ENCODE measurements at regions of chr4 and their contacts with region 1.

Region 1: DNA sequence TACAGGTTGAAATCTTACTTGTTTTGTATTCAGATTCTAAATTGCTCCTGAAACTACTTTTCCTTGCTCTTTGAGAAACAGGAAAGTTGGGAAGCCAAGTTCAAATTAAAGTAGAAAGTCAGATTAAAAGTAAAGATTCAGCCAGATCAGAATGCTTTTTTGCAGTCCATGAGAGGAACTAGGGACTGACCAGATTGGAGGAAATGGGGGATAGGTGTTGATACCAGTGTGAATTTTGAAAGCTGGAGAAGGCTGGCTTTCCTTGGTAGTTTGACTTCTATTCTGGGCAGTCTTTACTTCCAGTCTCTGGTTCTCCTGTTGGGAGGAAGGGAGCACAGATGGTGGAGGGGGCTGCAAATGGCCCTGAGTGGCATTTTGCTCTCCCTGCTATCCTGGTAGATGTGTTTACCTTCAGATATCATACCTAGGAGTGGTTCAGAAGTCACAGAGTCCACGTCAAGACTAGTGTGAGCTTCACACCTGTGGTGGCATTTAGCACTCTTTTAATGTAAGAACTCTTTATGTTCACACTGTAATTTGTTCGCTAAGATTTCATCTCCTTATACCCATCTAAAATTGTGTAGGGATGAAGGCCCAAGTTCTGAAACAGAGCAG is 68.8 kb downstream of the FNIP2 start:
- DNase-seq: no peak
- ATAC-seq: no peak
- H3K4me3 ChIP-seq: no peak overlapping the region
- H3K27ac ChIP-seq: no peak overlapping the region
- H3K4me1 ChIP-seq: no peaks in the 10 kb centered on the region
- H3K27me3 ChIP-seq: no peaks in the 10 kb centered on the region
- CTCF ChIP-seq: no peak
- EP300 ChIP-seq: no peak
- POLR2A ChIP-seq: no peak
- RAD21 ChIP-seq: no peak

Region 2: DNA sequence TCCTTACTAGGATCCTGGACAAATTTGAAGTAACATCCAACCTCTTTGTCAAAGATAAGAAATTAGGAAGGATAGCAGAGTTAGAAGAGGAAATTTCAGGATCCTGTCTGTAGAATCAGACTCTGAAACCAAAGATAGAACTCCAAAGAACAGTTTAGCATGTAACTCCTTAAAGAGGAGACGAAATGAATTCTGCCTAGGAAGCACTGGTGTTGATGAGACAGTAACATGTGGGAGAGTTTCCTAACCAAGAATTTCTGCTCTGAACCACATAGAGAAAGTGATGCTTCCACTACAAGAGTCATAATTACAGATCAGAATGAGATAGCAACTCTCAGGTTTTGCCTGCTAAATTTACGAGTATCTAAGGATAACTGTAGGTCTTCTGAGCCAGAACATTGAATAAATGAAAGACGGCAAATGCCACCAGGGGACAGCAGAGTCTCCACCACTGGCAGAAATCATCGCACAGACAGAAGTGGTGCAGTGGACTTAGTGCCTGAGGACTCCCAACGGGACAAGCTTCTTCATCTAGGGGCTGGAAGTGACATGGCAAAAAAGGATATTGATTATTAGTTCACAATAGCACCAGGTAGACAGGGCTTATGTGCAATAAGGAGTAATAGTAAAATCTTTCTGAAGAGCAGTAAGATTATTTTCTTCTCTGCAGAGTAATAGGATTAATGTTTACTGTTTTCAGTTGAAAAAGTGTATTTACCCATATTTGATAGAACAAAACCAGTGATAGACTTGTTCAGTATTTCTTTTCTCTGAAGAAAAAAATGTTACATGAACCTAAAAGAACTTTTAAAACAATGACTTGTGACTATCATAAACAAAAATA is 107.7 kb before region 1 on chr4:
- CTCF ChIA-PET with region 1: no interaction called
- POLR2A ChIA-PET with region 1: no interaction called
- RAD21 ChIA-PET with region 1: no interaction called
- SMC1A ChIA-PET with region 1: interaction called, 4 read pairs
- in situ Hi-C with region 1: no loop called
- intact Hi-C with region 1: loop called (anchors 5 kb)
- DNase-seq: peak; percentile 44
- ATAC-seq: peak; percentile 97
- H3K4me3 ChIP-seq: no peak overlapping the region
- H3K27ac ChIP-seq: no peak overlapping the region
- H3K4me1 ChIP-seq: no peaks in the 10 kb centered on the region
- H3K27me3 ChIP-seq: peaks cover 0 to 2% of the 10 kb centered on the region in 2 experiments; a peak in 1 of 4 replicates
- CTCF ChIP-seq: peak; percentile 81 to 97 (median 85)
- EP300 ChIP-seq: no peak
- POLR2A ChIP-seq: no peak
- RAD21 ChIP-seq: peak; percentile 85

Region 3: GRCh38 chr4:158823461-158823873 is 14.2 kb before region 1 on chr4:
- CTCF ChIA-PET with region 1: interaction called, 6 read pairs
- POLR2A ChIA-PET with region 1: interaction called, 5 read pairs
- RAD21 ChIA-PET with region 1: interaction called, 3 read pairs
- SMC1A ChIA-PET with region 1: interaction called, 18 read pairs
- in situ Hi-C with region 1: no loop called
- intact Hi-C with region 1: no loop called
- DNase-seq: no peak
- ATAC-seq: no peak
- H3K4me3 ChIP-seq: no peak overlapping the region
- H3K27ac ChIP-seq: no peak overlapping the region
- H3K4me1 ChIP-seq: peaks cover 22% of the 10 kb centered on the region
- H3K27me3 ChIP-seq: no peaks in the 10 kb centered on the region
- CTCF ChIP-seq: no peak
- EP300 ChIP-seq: no peak
- POLR2A ChIP-seq: no peak
- RAD21 ChIP-seq: no peak

Region 4: DNA sequence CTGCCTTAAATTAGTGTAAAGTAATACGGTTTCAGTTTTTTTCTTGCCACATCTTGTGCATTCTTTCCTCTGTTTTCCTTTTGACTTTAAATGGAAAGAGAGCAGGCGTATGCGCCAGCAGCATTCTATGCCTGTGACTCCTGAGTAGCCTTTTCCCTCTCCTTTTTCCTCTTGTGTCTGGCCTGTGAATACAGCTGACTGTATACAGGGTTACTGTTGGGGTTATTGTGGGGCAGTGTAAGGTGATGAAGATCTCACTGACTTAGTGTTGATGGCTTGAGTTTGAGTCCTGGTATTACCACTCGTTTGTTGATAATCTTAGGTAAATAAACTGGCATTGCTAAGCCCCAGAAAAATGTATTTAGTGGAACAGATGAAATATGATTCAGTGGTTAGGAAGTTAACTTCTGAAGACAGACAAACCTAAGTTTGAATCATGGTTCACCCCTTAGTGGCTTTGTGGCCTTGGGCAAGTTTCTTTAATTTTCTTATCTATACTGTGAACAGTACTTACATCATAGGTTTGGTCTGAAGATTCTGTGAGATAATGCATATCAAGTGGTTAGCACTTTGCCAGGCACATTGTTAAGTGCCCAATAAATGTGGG is 36.3 kb after region 1 on chr4:
- CTCF ChIA-PET with region 1: no interaction called
- POLR2A ChIA-PET with region 1: no interaction called
- RAD21 ChIA-PET with region 1: no interaction called
- SMC1A ChIA-PET with region 1: no interaction called
- in situ Hi-C with region 1: no loop called
- intact Hi-C with region 1: no loop called
- DNase-seq: no peak
- ATAC-seq: no peak
- H3K4me3 ChIP-seq: no peak overlapping the region
- H3K27ac ChIP-seq: no peak overlapping the region
- H3K4me1 ChIP-seq: no peaks in the 10 kb centered on the region
- H3K27me3 ChIP-seq: no peaks in the 10 kb centered on the region
- CTCF ChIP-seq: no peak
- EP300 ChIP-seq: no peak
- POLR2A ChIP-seq: no peak
- RAD21 ChIP-seq: no peak

Region 5: DNA sequence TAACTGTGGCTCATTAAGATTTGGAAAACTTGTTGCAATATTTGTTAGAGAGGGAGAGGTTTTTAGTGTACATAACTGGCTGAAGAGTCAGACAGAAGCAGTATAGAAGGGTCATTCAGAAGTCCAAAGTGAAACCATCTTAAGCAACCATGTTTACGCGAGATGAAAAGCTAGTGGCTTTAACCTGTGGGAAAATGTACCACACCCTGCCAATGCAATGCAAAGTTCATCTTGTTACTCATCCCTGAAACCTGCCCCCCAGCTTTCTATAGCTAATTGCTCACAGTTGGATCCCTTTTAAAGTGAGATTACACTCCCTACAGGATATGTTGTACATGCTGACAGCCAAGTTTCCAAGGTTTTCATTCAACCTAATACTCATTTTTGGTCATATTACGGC is 168.6 kb after region 1 on chr4:
- CTCF ChIA-PET with region 1: no interaction called
- POLR2A ChIA-PET with region 1: no interaction called
- RAD21 ChIA-PET with region 1: no interaction called
- SMC1A ChIA-PET with region 1: no interaction called
- in situ Hi-C with region 1: no loop called
- intact Hi-C with region 1: no loop called
- DNase-seq: no peak
- ATAC-seq: peak; percentile 68
- H3K4me3 ChIP-seq: no peak overlapping the region
- H3K27ac ChIP-seq: no peak overlapping the region
- H3K4me1 ChIP-seq: no peaks in the 10 kb centered on the region
- H3K27me3 ChIP-seq: no peaks in the 10 kb centered on the region
- CTCF ChIP-seq: no peak
- EP300 ChIP-seq: no peak
- POLR2A ChIP-seq: no peak
- RAD21 ChIP-seq: no peak

Region 6: GRCh38 chr4:159206427-159206871 is 368.8 kb after region 1 on chr4:
- CTCF ChIA-PET with region 1: no interaction called
- POLR2A ChIA-PET with region 1: no interaction called
- RAD21 ChIA-PET with region 1: no interaction called
- SMC1A ChIA-PET with region 1: no interaction called
- in situ Hi-C with region 1: no loop called
- intact Hi-C with region 1: no loop called
- DNase-seq: peak; percentile 83
- ATAC-seq: peak; percentile 84
- H3K4me3 ChIP-seq: no peak overlapping the region
- H3K27ac ChIP-seq: peak overlapping the region; percentile 60
- H3K4me1 ChIP-seq: peaks cover 27% of the 10 kb centered on the region
- H3K27me3 ChIP-seq: no peaks in the 10 kb centered on the region
- CTCF ChIP-seq: no peak
- EP300 ChIP-seq: no peak
- POLR2A ChIP-seq: no peak
- RAD21 ChIP-seq: no peak

Measured in GM12878 (cell line).